PC-9 (cell line): ENCODE measurements at regions of chr17 and their contacts with region 1.

Region 1: DNA sequence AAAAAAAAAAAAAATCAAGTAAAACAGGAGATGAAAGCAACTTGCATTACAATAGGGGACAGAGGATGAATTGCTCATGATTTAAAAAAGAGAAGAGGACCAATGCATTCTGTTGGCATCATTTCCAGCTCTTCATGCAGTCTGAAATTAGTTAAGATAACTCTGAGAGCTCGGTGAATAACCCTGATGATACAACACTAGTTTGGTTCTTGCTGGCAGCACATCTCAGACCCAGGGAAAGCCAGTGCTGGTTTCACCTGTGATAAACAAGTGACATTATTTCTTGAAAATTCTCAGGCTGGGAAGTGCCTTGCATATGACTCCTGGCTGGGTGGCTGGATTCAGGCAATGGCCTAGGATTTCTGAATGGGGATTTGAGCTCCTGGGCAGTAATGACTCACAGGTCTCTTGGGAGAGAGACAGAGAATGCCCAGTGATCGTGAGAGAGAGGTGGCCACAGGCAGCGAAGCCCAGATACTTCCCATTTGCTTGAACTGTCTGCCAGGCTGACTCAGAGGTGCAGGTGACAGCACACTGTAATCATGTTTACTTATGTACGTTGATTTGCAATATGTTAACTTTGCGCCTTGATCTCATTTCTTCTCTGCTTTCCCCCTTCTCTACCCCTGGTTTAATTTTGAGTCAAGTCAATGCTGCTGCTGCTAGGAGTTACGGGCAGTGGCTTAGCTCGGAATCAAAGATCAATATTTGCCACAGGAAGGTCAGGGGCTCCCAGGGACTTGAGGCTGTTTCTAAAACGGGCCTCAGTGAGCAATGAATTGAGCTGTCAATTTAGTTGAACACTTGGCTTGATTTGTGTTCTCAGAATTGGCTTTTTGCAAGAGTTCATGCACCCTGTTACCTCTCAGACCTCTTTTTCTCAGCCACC is 27.1 kb downstream of the ARSG start:
- DNase-seq: peak; percentile 71 to 97
- H3K4me3 ChIP-seq: peak overlapping the region; percentile 25; the same call in 1 of the 2 replicates
- H3K27ac ChIP-seq: peak overlapping the region; percentile 82
- H3K4me1 ChIP-seq: peaks cover 45% of the 10 kb centered on the region
- H3K27me3 ChIP-seq: no peaks in the 10 kb centered on the region
- CTCF ChIP-seq: no peak

Region 2: GRCh38 chr17:67336859-67337258 is 981.5 kb before region 1 on chr17:
- CTCF ChIA-PET with region 1: no interaction called
- POLR2A ChIA-PET with region 1: no interaction called
- intact Hi-C with region 1: no loop called
- DNase-seq: no peak
- H3K4me3 ChIP-seq: no peak overlapping the region
- H3K27ac ChIP-seq: no peak overlapping the region
- H3K4me1 ChIP-seq: no peaks in the 10 kb centered on the region; the same call in 1 of the 2 replicates
- H3K27me3 ChIP-seq: no peaks in the 10 kb centered on the region
- CTCF ChIP-seq: no peak

Region 3: DNA sequence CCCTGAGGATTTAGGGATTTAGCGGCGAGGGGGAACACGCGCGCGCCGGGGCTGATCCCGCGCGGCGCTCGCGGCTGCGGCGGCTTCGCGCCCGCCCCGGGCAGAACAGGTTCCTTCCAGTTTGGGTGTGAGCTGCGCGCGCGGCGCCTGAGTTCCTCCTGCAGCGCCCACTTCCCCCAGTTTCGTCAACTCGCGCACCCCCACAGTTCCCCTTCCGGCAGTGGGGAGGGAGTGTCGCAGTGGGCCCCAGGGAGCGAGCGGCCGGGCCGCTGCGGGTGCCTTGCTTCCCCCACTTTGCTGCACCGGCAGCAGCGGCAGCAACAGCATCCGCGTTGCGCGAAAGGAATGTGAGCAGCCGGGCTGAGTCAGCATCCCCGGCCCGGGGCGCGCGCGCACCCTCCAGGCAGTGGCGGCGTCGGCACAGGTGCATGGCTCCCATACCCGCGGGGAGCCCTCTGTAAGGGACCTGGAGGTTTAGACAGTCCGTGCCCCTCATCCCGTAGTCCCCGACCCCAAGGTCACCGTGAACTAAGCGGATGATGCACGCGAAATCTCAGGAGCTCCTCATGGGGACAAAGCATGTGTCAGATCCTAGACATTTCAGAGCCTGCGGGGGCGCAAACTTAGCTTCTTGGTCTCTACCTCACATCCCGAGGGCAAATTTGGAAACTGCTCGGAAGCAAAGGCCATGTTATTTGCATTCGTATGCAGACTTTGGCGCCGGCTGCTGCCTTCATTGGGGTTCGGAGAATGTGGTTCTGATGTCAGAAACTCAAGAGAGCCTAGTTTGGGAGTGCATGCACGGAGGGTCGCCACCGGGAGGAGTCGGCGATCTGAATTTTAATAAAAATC is 26.3 kb before region 1 on chr17:
- CTCF ChIA-PET with region 1: no interaction called
- POLR2A ChIA-PET with region 1: no interaction called
- intact Hi-C with region 1: loop called (anchors 2 kb)
- DNase-seq: peak; percentile 76 to 78
- H3K4me3 ChIP-seq: peak overlapping the region; percentile 76
- H3K27ac ChIP-seq: peak overlapping the region; percentile 58
- H3K4me1 ChIP-seq: peaks cover 20% of the 10 kb centered on the region
- H3K27me3 ChIP-seq: no peaks in the 10 kb centered on the region
- CTCF ChIP-seq: peak; percentile 33; the same call in 1 of the 2 replicates